Activated naive CD4-positive, alpha-beta T cell treated with anti-CD3 and anti-CD28 coated beads, Interleukin-2, amount 10 ng/mL, durations not matched to agents 7 days and 5 days (primary cell): ENCODE measurements at regions of chr11 and their contacts with region 1.

Region 1: DNA sequence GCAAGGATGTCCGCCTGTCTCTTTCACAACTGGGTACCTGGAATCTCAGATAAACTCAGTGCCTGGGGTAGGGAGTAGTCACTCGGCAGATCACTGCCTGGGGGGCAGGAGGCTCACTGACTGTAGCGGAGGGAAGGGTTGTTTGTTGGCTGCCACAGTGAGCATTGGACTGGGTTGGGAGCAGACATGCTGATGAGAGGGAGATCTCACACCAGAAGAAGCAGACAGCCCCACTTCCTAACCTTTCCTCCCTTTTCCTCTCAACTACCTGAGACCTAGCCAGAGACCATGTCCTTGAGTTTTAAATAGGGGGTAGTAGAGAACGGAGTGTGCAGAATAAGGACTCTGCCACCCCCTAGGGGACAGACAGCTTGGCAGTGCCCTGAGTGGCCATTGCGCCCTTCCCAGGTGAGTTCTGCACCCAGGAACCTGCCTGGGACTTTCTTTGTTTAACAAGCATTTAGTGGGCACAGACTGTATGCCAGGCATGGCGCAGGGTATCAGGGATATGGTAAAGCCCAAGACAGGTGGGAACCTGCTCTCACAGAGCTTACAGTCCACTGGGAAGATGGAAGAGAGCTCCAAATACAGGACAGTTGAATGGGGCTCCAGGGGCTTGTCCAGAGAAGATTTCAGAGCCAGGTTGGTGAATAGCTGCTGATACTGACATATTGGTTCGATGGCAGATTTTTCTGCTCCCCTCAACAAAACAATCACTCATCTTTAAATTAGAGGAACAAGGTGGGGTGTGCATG is 115.7 kb upstream of the NNMT start:
- DNase-seq: peak; percentile 37
- H3K4me3 Mint-ChIP-seq: no peak overlapping the region
- H3K27ac Mint-ChIP-seq: no peak overlapping the region
- H3K4me1 Mint-ChIP-seq: peaks cover 83% of the 10 kb centered on the region
- H3K27me3 Mint-ChIP-seq: peaks cover 12% of the 10 kb centered on the region

Region 2: DNA sequence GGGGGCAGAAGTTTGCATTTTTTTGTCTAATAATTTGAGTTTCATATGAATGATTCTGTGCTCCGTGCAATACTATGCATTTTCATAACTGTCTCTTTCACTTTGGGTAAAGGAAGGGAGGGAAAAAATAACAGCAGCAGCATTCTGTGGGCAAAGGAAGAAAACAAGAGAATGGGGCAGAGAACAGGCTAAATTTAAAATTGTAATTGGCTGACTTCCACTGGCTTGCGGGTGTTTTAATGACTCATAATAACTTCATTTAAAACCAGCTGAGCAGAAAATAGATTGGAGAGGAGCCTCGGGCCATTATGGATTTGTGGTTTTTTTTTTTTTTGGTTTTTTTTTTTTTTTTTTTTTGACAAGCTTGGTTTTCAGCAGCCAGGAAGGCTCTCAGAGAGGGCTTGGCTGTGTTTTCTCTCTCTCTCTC is 13.6 kb before region 1 on chr11:
- CTCF ChIA-PET with region 1: interaction called, 13 read pairs
- DNase-seq: peak; percentile 37
- H3K4me3 Mint-ChIP-seq: peak overlapping the region; percentile 6
- H3K27ac Mint-ChIP-seq: peak overlapping the region; percentile 86
- H3K4me1 Mint-ChIP-seq: peaks cover 85% of the 10 kb centered on the region
- H3K27me3 Mint-ChIP-seq: peaks cover 10% of the 10 kb centered on the region

Region 3: GRCh38 chr11:114192841-114193389 is 12.4 kb after region 1 on chr11:
- CTCF ChIA-PET with region 1: interaction called, 26 read pairs
- DNase-seq: no peak
- H3K4me3 Mint-ChIP-seq: no peak overlapping the region
- H3K27ac Mint-ChIP-seq: no peak overlapping the region
- H3K4me1 Mint-ChIP-seq: peaks cover 37% of the 10 kb centered on the region
- H3K27me3 Mint-ChIP-seq: no peaks in the 10 kb centered on the region

Region 4: GRCh38 chr11:114208377-114208776 is 27.9 kb after region 1 on chr11:
- CTCF ChIA-PET with region 1: no interaction called
- DNase-seq: peak; percentile 52
- H3K4me3 Mint-ChIP-seq: no peak overlapping the region
- H3K27ac Mint-ChIP-seq: peak overlapping the region; percentile 24
- H3K4me1 Mint-ChIP-seq: peaks cover 49% of the 10 kb centered on the region
- H3K27me3 Mint-ChIP-seq: peaks cover 37% of the 10 kb centered on the region